Prostate gland (tissue), 2 donors: ENCODE measurements at regions of chr2 and their contacts with region 1.

Region 1: DNA sequence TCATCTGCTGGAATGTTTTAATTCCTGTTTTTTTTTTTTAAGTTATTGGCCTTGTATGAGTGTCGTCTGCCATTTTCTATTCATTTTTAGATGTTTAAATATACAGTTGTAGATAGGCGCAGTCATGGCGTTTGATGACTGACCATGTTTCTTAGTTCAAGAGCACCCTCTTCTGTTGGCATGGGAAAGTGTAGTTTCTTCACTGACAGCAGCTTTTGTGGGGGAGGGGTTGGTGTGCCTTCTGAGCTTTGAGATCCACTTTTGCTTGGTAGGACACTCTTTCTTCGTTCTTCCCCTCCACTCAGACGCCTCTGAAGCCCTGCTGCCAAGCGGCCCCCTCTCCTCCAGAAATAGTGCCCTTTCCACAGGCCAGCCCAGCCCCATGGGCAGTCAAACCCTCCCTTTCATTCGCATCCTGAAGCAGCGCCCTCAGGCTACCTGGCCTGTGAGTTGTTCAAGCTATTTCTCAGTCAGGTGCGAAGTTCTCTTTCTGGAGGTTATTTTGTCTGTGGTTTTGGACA is 492.0 kb downstream of the TNS1 start:
- DNase-seq: peak; percentile 64
- H3K4me3 ChIP-seq: no peak overlapping the region
- H3K27ac ChIP-seq: no peak overlapping the region
- H3K4me1 ChIP-seq: no peaks in the 10 kb centered on the region
- H3K27me3 ChIP-seq: no peaks in the 10 kb centered on the region
- CTCF ChIP-seq: peak; percentile 40 to 87 (median 74)
- POLR2A ChIP-seq: no peak

Region 2: GRCh38 chr2:216880509-216881184 is 630.2 kb before region 1 on chr2:
- intact Hi-C with region 1: no loop called
- DNase-seq: no peak
- H3K4me3 ChIP-seq: no peak overlapping the region
- H3K27ac ChIP-seq: no peak overlapping the region
- H3K4me1 ChIP-seq: no peaks in the 10 kb centered on the region
- H3K27me3 ChIP-seq: no peaks in the 10 kb centered on the region
- CTCF ChIP-seq: no peak
- POLR2A ChIP-seq: no peak

Region 3: DNA sequence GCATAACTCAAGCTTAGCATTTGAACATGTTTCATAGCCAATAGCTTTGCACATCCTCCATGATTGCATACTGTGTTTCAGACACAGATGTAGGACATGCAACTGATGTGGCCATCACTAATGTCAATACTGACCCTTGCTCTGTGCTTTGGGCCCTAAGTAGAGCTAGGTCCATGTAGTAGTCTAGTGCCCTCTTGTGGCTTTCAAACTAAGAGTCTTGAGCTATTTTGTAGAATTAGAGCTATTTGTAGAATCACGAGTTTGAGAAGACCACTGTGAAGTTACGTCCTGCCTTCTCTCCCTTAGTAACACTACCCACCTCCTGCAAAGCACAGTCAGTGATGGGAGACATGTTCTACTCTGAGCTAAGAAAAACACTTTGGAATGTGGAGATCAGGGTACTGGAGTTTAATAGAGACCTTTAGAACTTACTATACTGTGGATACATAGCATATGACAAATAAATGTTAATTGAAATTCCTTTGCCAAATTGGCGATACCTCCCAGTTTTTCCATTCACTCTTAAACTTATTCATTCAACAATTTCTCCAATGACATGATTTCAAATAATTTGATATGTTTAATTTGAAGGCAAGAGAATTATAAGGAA is 344.5 kb before region 1 on chr2:
- intact Hi-C with region 1: loop called (anchors 10 kb)
- DNase-seq: no peak
- H3K4me3 ChIP-seq: no peak overlapping the region
- H3K27ac ChIP-seq: no peak overlapping the region
- H3K4me1 ChIP-seq: no peaks in the 10 kb centered on the region
- H3K27me3 ChIP-seq: no peaks in the 10 kb centered on the region
- CTCF ChIP-seq: peak in 2 of 4 experiments; percentile 36 to 44
- POLR2A ChIP-seq: no peak

Region 4: GRCh38 chr2:217371781-217372213 is 139.0 kb before region 1 on chr2:
- intact Hi-C with region 1: no loop called
- DNase-seq: no peak
- H3K4me3 ChIP-seq: no peak overlapping the region
- H3K27ac ChIP-seq: peak overlapping the region in 1 of 2 donors; percentile 15
- H3K4me1 ChIP-seq: peaks cover 2% of the 10 kb centered on the region
- H3K27me3 ChIP-seq: no peaks in the 10 kb centered on the region
- CTCF ChIP-seq: no peak
- POLR2A ChIP-seq: no peak

Region 5: GRCh38 chr2:217434181-217434975 is 76.5 kb before region 1 on chr2:
- intact Hi-C with region 1: loop called (anchors 5 kb)
- DNase-seq: peak; percentile 85
- H3K4me3 ChIP-seq: no peak overlapping the region
- H3K27ac ChIP-seq: peak overlapping the region; percentile 16 to 49
- H3K4me1 ChIP-seq: no peaks in the 10 kb centered on the region
- H3K27me3 ChIP-seq: no peaks in the 10 kb centered on the region
- CTCF ChIP-seq: no peak
- POLR2A ChIP-seq: peak; percentile 8

Region 6: DNA sequence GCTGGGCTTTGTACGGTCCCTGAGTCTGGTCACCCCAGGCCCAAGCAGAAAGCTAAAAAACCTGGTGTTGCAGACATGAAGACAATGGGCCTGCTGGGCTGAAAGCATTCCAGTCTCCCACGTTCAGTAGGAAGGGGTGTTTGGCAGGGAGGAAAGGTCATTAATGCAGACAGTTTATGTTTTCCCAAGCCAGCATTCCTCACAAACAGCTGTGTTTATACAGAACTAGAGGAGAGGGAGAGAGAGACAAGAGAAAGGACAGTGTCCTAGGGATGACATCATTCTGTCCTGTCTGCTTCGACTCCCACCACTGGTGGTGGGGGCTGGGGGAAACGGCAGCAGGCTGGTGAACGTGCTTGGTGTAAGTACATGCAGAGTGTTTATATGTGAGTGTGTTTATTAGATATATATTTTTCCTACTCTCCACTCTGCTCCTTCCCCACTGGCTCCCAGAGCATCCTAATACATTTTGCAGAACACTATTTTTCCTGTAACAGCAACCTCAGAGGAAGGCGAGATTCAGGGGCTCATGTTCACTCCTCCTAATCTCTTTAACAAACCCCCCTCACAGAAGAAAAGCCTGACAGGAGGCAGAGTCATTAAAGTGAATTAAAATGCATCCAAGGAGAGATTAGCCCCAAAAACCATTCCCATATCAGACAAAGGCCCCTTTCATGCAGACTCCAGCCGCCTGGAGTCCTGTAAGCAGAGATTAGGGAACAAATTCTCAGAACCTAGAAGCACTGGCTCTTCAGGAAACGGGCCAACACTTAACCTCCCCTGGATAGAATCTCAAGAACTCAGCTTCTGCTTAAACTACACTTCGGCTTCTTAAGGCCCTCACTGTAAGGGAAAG is 111.6 kb after region 1 on chr2:
- intact Hi-C with region 1: loop called (anchors 5 kb)
- DNase-seq: no peak
- H3K4me3 ChIP-seq: no peak overlapping the region
- H3K27ac ChIP-seq: peak overlapping the region; percentile 21 to 45
- H3K4me1 ChIP-seq: no peaks in the 10 kb centered on the region
- H3K27me3 ChIP-seq: no peaks in the 10 kb centered on the region
- CTCF ChIP-seq: no peak
- POLR2A ChIP-seq: no peak

Region 7: GRCh38 chr2:217713395-217714286 is 202.8 kb after region 1 on chr2:
- intact Hi-C with region 1: loop called (anchors 5 kb)
- DNase-seq: peak; percentile 64
- H3K4me3 ChIP-seq: no peak overlapping the region
- H3K27ac ChIP-seq: peak overlapping the region; percentile 52 to 54
- H3K4me1 ChIP-seq: no peaks in the 10 kb centered on the region
- H3K27me3 ChIP-seq: no peaks in the 10 kb centered on the region
- CTCF ChIP-seq: peak; percentile 85 to 97 (median 93)
- POLR2A ChIP-seq: no peak